Motor neuron (in vitro differentiated cells): ENCODE measurements at regions of chr7 and their contacts with region 1.

Region 1: DNA sequence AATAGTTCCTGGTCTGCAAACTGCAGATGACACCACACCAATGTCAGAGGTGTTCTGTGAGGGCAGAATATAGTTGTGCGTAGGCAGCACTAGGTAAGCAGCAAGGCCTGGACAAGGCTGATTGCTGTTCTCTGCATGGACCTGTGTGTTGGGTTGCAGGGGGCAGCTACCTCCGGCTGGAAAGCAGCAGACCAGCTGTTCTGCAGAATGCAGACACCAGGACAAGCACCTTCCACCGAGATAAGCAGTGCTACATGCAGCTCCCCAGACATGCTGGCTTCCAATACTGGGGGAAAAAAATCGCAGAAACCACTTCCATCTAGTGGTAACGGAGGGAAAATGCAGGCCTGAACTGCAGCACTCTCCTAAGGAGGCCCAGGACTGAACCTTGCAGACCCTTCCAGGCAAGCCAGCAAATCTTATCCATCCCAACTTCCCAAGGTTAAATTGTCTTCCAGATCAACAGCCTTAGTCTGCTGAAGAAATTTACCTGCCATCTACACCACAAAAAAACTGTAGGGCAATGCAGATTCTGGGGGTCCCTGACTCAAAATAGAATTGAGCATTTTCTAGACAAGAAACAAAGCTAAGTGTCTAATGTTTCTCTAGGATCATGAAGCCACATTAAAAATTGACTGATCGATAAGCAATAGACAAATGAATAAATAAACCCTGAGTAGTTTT is 50.5 kb upstream of the COBL start:
- ATAC-seq: peak; percentile 79 to 100 (median 98)
- H3K4me3 ChIP-seq: no peak overlapping the region
- H3K27ac ChIP-seq: no peak overlapping the region
- H3K4me1 ChIP-seq: no peaks in the 10 kb centered on the region

Region 2: GRCh38 chr7:51162724-51163329 is 204.2 kb before region 1 on chr7:
- in situ Hi-C with region 1: loop called in 5 of 9 experiments (anchors 10 to 25 kb)
- ATAC-seq: peak; percentile 93 to 99 (median 97)
- H3K4me3 ChIP-seq: no peak overlapping the region
- H3K27ac ChIP-seq: peak overlapping the region in 1 of 2 donors; percentile 62
- H3K4me1 ChIP-seq: no peaks in the 10 kb centered on the region

Region 3: GRCh38 chr7:51187941-51188340 is 179.1 kb before region 1 on chr7:
- in situ Hi-C with region 1: loop called in 1 of 9 experiments (anchors 25 kb)
- ATAC-seq: peak; percentile 66 to 92 (median 75)
- H3K4me3 ChIP-seq: no peak overlapping the region
- H3K27ac ChIP-seq: no peak overlapping the region
- H3K4me1 ChIP-seq: no peaks in the 10 kb centered on the region

Region 4: DNA sequence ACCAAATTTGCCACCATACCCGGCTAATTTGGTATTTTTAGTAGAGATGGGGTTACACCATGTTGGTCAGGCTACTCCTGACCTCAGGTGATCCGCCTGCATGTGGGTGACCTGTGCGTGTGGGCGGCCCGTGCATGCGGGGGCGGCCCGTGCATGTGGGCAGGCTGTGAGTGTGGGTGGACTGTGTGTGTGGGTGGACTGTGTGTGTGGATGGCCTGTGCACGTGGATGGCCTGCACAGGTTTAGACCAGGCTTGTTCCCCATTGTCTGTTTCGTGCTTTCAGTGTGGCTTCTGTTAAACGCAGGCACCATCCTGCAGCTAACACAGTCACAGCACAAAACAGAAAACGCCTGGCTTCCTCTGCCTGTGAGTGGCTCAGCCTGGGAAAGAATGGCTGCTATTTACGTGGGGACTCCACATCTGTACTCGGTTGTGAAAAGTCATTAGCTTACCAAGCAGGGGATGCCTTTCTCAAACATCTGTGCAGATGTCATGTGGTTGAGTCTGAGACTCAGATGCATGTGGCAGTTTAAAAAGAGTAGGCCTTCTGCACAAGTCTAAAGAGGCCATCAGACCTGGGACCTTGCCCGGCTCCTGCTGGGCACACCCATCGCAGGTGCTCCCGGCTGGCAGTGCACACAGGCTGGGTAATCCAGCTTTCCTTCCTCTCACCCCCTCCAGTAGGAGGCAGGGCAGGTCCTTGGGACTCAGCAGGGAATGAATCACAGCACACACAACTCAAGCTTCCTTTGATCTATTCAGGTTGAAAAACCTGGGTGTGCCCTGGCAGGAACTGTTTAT is 142.1 kb before region 1 on chr7:
- in situ Hi-C with region 1: loop called in 1 of 9 experiments (anchors 25 kb)
- ATAC-seq: peak in 3 of 8 experiments; percentile 40 to 57 (median 53)
- H3K4me3 ChIP-seq: no peak overlapping the region
- H3K27ac ChIP-seq: no peak overlapping the region
- H3K4me1 ChIP-seq: no peaks in the 10 kb centered on the region

Region 5: GRCh38 chr7:52209614-52210013 is 842.5 kb after region 1 on chr7:
- in situ Hi-C with region 1: no loop called
- ATAC-seq: peak in 5 of 8 experiments; percentile 29 to 78 (median 50)
- H3K4me3 ChIP-seq: no peak overlapping the region
- H3K27ac ChIP-seq: no peak overlapping the region
- H3K4me1 ChIP-seq: no peaks in the 10 kb centered on the region

Region 6: DNA sequence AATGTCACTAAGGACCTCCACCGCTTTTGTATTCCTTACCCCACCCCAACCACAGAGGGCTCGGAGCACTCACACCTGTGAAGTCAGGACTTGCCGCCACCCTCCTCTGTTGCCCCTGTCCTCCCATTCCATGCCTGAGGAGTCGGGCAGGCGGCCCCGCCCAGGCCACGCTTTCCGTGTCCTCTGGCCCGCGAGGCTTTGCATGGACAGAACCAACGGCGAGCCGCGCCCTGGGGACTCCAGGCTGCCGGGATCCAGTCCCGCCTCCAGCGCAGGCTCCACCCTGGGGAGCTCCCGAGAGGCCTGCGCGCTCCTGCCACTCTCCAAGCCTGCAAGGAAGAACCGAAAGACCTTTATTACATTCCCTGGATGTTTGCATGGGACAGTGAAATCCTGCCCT is 1302.0 kb after region 1 on chr7:
- in situ Hi-C with region 1: no loop called
- ATAC-seq: no peak
- H3K4me3 ChIP-seq: no peak overlapping the region
- H3K27ac ChIP-seq: no peak overlapping the region
- H3K4me1 ChIP-seq: peaks cover 13 to 21% of the 10 kb centered on the region in 2 donors